Transverse colon (tissue), 4 donors: ENCODE measurements at regions of chr7 and their contacts with region 1.

Region 1: DNA sequence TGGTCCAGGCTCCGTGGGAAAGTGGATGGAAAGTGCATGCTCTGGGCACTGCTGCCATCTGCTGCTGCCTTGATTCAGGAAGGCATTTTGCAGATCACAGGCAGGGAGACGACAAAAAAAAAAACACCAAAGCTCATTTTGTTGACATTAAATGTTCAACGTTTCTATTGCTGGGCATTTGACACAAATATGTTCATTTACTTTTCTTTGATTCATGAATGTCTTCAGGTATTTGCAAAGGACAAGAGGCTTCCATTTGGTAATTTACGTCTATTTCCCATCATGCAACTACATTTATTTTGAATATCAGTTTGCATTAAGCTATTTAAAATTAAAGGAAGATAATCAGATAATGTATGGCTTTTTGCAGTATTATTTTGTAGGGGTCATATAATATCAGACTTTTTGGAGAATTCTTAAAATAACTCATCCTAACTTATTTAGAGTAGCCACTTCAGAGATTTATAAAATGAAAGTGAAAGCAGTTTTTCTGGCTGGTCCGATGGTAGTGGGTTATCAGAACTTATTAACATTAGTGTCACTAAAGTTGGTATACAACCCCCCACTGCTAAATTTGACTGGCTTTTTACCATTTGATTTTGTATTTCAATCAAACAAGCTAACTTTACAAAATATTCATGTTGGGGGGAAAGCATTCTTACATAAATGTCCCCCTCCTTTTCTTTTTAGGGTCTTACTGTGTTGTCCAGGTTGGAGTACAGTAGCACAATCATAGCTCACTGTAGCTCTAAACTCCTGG is 65.3 kb downstream of the PDIA4 start:
- DNase-seq: peak; percentile 73
- H3K4me3 ChIP-seq: peak overlapping the region; percentile 23 to 62 (median 47)
- H3K27ac ChIP-seq: peak overlapping the region; percentile 66 to 76 (median 72)
- H3K4me1 ChIP-seq: peaks cover 3 to 23% (median 15%) of the 10 kb centered on the region in 4 donors
- H3K27me3 ChIP-seq: no peaks in the 10 kb centered on the region
- CTCF ChIP-seq: peak; percentile 54 to 64 (median 56)
- EP300 ChIP-seq: no peak
- POLR2A ChIP-seq: no peak

Region 2: GRCh38 chr7:148262721-148263229 is 700.2 kb before region 1 on chr7:
- in situ Hi-C with region 1: loop called in 2 of 4 experiments (anchors 25 kb)
- intact Hi-C with region 1: no loop called
- DNase-seq: peak; percentile 71
- H3K4me3 ChIP-seq: peak overlapping the region in 1 of 4 donors; percentile 29
- H3K27ac ChIP-seq: no peak overlapping the region
- H3K4me1 ChIP-seq: peaks cover 0 to 6% (median 2%) of the 10 kb centered on the region in 4 donors
- H3K27me3 ChIP-seq: peaks cover 3% of the 10 kb centered on the region
- CTCF ChIP-seq: peak; percentile 87 to 95 (median 94)
- EP300 ChIP-seq: no peak
- POLR2A ChIP-seq: no peak

Region 3: DNA sequence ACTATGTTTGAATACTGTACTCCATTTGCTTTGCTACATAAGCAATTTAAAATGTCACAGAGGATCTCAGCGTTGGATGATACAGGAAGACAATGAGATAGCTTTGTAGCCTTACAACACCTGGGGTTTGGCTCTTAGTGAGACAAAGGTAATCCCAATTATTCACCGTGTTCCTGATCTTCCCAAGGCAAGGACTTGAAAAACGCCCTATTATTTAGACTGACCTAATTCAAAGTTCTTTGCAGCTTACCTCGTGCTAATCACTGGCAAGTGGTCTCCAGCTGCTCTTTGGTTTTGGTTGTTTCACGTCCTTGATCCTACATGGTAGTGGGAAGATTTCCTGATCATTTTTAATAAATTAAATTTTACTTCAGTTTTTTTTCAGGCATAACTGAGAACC is 395.5 kb before region 1 on chr7:
- in situ Hi-C with region 1: loop called (anchors 5 to 10 kb)
- intact Hi-C with region 1: no loop called
- DNase-seq: no peak
- H3K4me3 ChIP-seq: no peak overlapping the region
- H3K27ac ChIP-seq: no peak overlapping the region
- H3K4me1 ChIP-seq: peaks cover 0 to 12% (median 4%) of the 10 kb centered on the region in 4 donors
- H3K27me3 ChIP-seq: no peaks in the 10 kb centered on the region
- CTCF ChIP-seq: no peak
- EP300 ChIP-seq: no peak
- POLR2A ChIP-seq: no peak

Region 4: DNA sequence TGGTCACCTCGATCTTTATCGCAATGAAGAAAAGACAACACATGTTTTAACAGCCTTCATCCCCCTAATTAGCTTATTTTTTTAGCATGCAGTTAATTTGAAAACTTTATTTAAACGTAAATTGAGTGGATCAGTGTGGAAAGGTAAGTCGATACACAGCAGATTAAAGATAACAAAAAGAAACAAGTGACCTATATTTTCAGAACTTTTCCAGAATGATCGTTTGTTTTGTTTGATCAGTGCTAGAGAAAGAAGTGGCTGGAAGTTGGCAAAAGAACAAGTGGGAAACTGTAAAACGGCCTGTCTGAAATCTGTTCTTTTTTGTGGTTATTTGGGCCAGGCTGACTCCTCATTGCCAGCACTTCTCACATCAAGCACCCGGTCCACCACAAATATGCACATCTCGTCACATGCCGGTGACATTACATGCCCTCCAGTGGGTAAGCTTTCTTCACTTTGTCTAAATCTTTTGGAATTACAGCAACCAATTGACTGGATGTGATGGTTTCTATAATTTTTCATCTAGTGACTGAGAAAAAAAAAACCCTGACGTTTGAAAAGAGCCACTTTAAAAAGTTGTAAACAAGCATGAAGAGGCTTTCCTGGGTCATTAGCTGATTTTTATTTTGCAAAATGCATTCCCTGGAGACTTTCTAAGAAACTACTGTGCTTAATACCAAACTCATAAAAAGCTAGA is 339.3 kb before region 1 on chr7:
- in situ Hi-C with region 1: no loop called
- intact Hi-C with region 1: no loop called
- DNase-seq: no peak
- H3K4me3 ChIP-seq: no peak overlapping the region
- H3K27ac ChIP-seq: no peak overlapping the region
- H3K4me1 ChIP-seq: peaks cover 0 to 7% (median 0%) of the 10 kb centered on the region in 4 donors
- H3K27me3 ChIP-seq: peaks cover 33% of the 10 kb centered on the region
- CTCF ChIP-seq: no peak
- EP300 ChIP-seq: no peak
- POLR2A ChIP-seq: no peak

Region 5: GRCh38 chr7:148856891-148857290 is 106.1 kb before region 1 on chr7:
- in situ Hi-C with region 1: loop called in 2 of 4 experiments (anchors 10 to 25 kb)
- intact Hi-C with region 1: no loop called
- DNase-seq: no peak
- H3K4me3 ChIP-seq: no peak overlapping the region
- H3K27ac ChIP-seq: no peak overlapping the region
- H3K4me1 ChIP-seq: peaks cover 0 to 14% (median 5%) of the 10 kb centered on the region in 4 donors
- H3K27me3 ChIP-seq: no peaks in the 10 kb centered on the region
- CTCF ChIP-seq: no peak
- EP300 ChIP-seq: no peak
- POLR2A ChIP-seq: no peak

Region 6: GRCh38 chr7:148884299-148885022 is 78.5 kb before region 1 on chr7:
- in situ Hi-C with region 1: loop called in 1 of 4 experiments (anchors 10 kb)
- intact Hi-C with region 1: no loop called
- DNase-seq: peak; percentile 94
- H3K4me3 ChIP-seq: peak overlapping the region; percentile 57 to 98 (median 86)
- H3K27ac ChIP-seq: peak overlapping the region; percentile 95 to 98 (median 96)
- H3K4me1 ChIP-seq: peaks cover 0 to 16% (median 6%) of the 10 kb centered on the region in 4 donors
- H3K27me3 ChIP-seq: no peaks in the 10 kb centered on the region
- CTCF ChIP-seq: no peak
- EP300 ChIP-seq: no peak
- POLR2A ChIP-seq: peak; percentile 69